Mucosa of descending colon (tissue), 3 donors: ENCODE measurements at regions of chr4 and their contacts with region 1.

Region 1: GRCh38 chr4:151798678-151799416 is 38.0 kb upstream of the GATB start:
- DNase-seq: no peak
- ATAC-seq: no peak
- H3K4me3 ChIP-seq: no peak overlapping the region
- H3K4me1 ChIP-seq: peaks cover 7% of the 10 kb centered on the region
- CTCF ChIP-seq: no peak

Region 2: GRCh38 chr4:151644622-151645021 is 154.2 kb before region 1 on chr4:
- intact Hi-C with region 1: no loop called
- DNase-seq: peak in 2 of 3 donors; percentile 10 to 20
- ATAC-seq: peak; percentile 44
- H3K4me3 ChIP-seq: no peak overlapping the region
- H3K4me1 ChIP-seq: no peaks in the 10 kb centered on the region
- CTCF ChIP-seq: peak; percentile 24

Region 3: DNA sequence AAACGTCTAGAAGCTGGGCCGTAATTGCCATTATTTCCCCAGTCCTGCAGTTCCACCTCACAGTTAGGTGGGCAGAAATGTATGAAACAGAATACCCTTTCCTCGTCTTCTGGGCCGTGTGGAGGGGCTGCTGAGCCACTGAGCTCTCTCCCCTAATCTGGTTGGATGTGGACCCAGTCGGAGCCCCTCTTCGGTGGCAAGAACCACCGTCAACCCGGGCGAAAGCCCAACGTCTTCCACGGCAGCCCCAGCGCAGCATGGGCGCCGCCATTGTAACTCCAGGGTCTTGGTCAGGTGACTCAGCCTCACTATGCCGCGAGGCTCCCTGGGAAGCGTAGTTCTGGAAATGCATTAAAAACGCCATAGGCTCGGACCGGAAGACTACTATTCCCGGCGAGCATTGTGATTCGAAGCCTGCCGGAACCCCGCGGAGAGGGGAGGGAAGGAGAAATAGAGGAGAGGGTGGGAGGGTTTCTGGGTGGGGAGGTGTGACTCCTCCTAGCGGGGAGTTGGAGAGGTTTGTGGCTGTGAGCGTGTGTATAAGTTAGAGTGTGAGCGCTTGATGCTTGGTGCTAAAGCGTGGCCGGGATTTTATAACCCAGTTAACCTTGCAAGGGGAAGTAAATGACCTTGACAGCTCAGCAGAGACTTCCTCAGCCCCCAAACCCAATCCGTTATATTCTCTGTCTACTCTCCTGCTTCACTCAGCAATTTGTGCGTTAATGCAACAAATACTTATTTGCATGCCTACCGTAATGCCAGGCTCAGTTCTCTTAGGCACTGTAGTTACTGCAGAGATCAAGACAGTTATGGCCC is 37.9 kb before region 1 on chr4 and contains the start of gene GATB:
- intact Hi-C with region 1: loop called in 1 of 2 experiments (anchors 2 kb)
- DNase-seq: peak; percentile 92 to 97 (median 92)
- ATAC-seq: peak; percentile 100
- H3K4me3 ChIP-seq: peak within 1 kb of the TSS; percentile 47
- H3K4me1 ChIP-seq: peaks cover 9% of the 10 kb centered on the region
- CTCF ChIP-seq: peak; percentile 39
- total RNA-seq, gene GATB: 15.6 to 20.2 (median 17.2) TPM